ENCODE measurements at regions of chr4 and their contacts with region 1.

Region 1: DNA sequence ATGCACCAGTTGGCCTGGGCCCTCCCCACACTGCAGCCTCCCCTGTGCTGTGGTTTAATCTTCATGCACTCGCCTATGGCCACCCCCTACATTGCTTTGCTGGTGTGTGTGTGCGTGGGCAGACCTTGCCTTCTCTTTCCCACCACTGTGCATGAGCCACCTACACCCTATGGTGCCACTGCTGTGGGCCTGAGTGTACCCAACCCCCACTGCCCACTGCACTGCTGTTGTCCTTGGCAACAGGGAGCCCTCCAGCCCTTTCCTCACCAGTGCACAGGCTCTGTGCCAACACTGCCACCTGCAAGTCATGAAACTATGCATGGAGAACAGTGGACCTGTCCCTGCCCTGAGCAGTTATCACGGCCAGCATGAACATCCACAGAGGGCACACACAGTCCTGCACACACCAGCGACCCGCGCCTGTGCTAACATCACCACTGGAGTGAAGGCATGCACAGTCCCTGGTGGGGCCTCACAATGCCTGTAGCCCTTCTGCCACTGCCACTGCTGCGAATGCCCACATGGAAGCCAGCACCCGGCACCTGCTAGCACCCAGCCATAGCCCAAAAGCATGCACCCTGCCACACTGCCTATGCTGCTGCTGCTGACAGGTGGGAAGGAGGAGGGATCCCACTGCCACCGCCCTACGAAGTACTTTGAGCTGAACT is 237.8 kb upstream of the ARSJ start:
- DNase-seq: no peak
- H3K4me3 ChIP-seq: no peak overlapping the region
- H3K27ac ChIP-seq: no peak overlapping the region
- H3K4me1 ChIP-seq: no peaks in the 10 kb centered on the region
- H3K27me3 ChIP-seq: no peaks in the 10 kb centered on the region
- CTCF ChIP-seq: no peak

Region 2: GRCh38 chr4:114057746-114058145 is 159.5 kb before region 1 on chr4:
- intact Hi-C with region 1: no loop called
- DNase-seq: no peak
- H3K4me3 ChIP-seq: no peak overlapping the region
- H3K27ac ChIP-seq: no peak overlapping the region
- H3K4me1 ChIP-seq: no peaks in the 10 kb centered on the region
- H3K27me3 ChIP-seq: no peaks in the 10 kb centered on the region
- CTCF ChIP-seq: no peak

Region 3: DNA sequence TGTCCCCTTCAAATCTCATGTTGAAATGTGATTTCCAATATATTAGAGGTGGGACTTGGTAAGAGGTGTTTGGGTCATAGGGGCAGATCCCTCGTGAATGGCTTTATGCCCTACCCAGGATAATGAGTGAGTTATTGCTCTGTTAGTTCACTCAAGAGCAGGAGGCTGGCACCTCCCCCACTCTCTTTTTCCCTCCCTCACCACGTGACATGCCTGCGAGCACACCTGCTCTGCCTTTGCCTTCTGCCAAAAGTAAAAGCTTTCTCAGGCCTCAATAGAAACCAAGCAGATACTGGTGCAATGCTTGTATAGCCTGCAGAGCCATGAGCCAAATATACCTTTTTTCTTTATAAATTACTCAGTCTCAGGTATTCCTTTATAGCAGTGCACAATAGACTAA is 95.1 kb after region 1 on chr4:
- intact Hi-C with region 1: loop called (anchors 5 kb)
- DNase-seq: no peak
- H3K4me3 ChIP-seq: no peak overlapping the region
- H3K27ac ChIP-seq: no peak overlapping the region
- H3K4me1 ChIP-seq: no peaks in the 10 kb centered on the region
- H3K27me3 ChIP-seq: no peaks in the 10 kb centered on the region
- CTCF ChIP-seq: no peak

Measured in ascending aorta (tissue), 2 donors.